K562 (cell line): ENCODE measurements at regions of chr3 and their contacts with region 1.

Region 1: DNA sequence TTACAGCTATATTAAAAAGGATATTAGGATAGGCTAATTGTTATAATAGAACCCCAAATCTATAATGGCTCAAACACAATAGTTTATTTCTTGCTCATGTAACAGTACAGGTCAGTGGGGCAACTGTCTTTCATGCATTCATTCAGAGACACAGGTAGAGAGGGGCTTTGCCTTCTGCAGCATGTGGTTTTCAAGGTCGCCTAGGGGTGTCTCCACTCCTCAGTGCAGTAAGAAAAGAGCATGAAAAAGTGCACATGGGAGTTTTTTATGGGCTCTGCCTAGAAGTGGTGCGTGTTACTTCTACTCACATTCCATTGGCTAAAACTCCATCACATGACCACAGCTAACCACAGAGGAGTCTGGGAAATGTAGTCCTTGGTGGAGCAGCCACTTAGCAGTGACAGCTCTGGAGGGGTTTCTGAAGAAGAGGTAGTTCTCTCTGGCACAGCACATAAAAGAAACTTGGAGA is 1.8 kb downstream of the ZBTB38 start:
- DNase-seq: peak; percentile 82 to 94 (median 87)
- ATAC-seq: peak; percentile 89
- H3K4me3 ChIP-seq: no peak overlapping the region; the same call in 1 of the 2 replicates
- H3K27ac ChIP-seq: peak overlapping the region; percentile 95
- H3K4me1 ChIP-seq: peaks cover 25 to 42% of the 10 kb centered on the region in 2 experiments
- H3K27me3 ChIP-seq: no peaks in the 10 kb centered on the region
- CTCF ChIP-seq: peak; percentile 61 to 73 (median 65)
- EP300 ChIP-seq: peak; percentile 34; the same call in 1 of the 2 replicates
- POLR2A ChIP-seq: peak; percentile 65
- RAD21 ChIP-seq: peak; percentile 49 to 58

Region 2: DNA sequence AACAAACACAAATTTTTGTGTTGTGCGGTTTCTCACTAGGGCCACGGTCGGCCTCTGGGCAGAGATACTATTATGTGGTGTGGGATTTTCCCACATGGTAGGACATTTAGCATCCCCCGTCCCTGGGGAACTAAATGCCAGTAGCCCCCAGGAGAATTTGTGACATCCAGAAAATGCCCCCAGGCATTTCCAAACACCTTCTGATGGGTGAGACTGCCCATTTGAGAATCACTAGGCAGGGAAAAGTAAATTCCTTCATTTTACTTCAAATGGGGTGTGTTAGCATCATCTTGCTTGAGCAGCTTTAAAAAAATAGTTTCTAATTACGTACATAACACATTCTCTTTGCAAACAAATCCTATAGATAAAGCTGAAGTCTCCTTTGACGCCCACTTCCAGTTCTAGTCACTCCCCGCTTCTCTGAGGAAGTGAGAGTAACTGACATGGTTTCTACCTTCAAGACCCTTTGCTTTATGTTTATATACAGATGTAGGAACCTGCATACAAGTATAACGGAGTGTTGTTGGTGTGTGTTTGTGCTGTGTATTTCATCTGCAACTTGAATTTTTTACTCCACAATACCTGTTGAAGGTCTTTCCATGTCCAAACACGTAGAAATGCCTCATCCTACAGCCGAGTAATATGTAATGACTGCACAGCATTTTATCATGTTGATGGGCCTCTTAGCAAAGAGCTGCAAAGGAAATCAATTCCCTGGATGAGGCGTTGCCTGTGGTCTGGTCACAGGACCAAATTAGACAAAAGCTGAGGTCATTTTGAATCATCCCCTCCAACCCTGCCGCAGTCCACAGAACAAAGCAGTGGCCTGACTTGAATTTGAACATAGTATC is 33.2 kb before region 1 on chr3:
- CTCF ChIA-PET with region 1: no interaction called
- POLR2A ChIA-PET with region 1: no interaction called
- in situ Hi-C with region 1: no loop called
- intact Hi-C with region 1: no loop called
- DNase-seq: peak in 1 of 4 experiments; percentile 49
- ATAC-seq: no peak
- H3K4me3 ChIP-seq: no peak overlapping the region
- H3K27ac ChIP-seq: peak overlapping the region; percentile 5; the same call in 1 of the 3 replicates
- H3K4me1 ChIP-seq: peaks cover 14 to 51% of the 10 kb centered on the region in 2 experiments
- H3K27me3 ChIP-seq: no peaks in the 10 kb centered on the region
- CTCF ChIP-seq: no peak
- EP300 ChIP-seq: no peak
- POLR2A ChIP-seq: no peak
- RAD21 ChIP-seq: no peak

Region 3: GRCh38 chr3:141386611-141387111 is 16.6 kb after region 1 on chr3:
- CTCF ChIA-PET with region 1: no interaction called
- POLR2A ChIA-PET with region 1: interaction called, 27 read pairs
- in situ Hi-C with region 1: no loop called
- intact Hi-C with region 1: no loop called
- DNase-seq: peak in 1 of 4 experiments; percentile 42
- ATAC-seq: peak; percentile 96
- H3K4me3 ChIP-seq: no peak overlapping the region
- H3K27ac ChIP-seq: no peak overlapping the region; the same call in 2 of the 3 replicates
- H3K4me1 ChIP-seq: peaks cover 0 to 6% of the 10 kb centered on the region in 2 experiments; a peak in 3 of 5 replicates
- H3K27me3 ChIP-seq: no peaks in the 10 kb centered on the region
- CTCF ChIP-seq: no peak
- EP300 ChIP-seq: peak; percentile 73; the same call in 1 of the 2 replicates
- POLR2A ChIP-seq: no peak
- RAD21 ChIP-seq: no peak